Activated T-helper 1 cell treated with anti-CD3 and anti-CD28 coated beads, Interleukin-12 subunit alpha, Interleukin-12 subunit beta, Interleukin-2, Interleukin-4 antibody, amounts not matched to agents 30 ng/mL and 10 ng/mL and 1 ng/mL, durations not matched to agents 14 hours and 24 hours and 36 hours (primary cell): ENCODE measurements at regions of chr12 and their contacts with region 1.

Region 1: DNA sequence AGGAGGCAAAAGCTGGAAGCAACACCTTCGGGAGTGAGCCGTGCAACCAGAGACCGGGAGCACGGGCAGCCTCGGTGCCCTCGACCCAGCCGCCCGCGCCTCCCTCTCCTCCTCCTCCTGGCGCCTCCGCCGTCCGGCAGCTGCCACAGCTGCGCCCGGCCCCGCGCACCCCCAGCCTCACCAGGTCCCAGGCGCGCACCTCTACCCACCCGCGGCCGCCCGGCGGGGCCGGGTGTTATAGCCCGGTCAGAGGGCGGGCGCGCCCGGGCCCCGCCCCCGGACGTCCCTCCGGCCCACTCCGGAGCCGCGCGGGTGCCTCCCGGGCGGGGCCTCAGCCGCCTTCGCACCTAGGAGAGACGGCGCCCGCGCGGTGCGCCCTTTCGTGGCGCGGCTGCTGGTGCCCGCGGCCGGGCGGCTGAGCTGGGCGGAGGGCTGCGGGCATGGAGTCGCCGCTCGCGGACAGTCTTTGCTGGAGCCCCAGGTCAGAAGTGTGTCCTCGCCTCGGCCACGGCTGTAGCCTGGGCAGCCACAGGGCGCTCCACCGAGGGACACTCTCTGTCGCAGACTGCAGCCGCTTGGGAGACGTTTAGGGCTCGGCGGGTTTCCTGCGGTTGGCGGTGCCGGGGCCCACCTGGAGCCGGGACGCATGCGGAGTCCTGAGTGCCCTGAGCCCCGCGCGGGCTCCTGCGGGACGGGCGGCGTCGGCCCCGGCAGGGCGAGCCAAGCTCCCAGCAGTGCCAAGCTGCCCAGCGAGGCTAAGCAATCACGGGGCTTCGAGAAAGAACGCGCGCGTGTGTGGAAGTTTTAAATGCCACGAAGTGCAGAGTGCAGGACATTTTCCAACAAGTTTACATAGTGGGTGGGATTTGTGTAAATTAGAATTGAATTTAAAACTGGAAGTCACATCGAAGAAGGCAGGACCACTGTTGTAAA is at the start of gene CPM:
- DNase-seq: peak; percentile 81
- H3K4me3 Mint-ChIP-seq: peak within 1 kb of the TSS; percentile 96
- H3K27ac Mint-ChIP-seq: peak within 1 kb of the TSS; percentile 88
- H3K4me1 Mint-ChIP-seq: peaks cover 28% of the 10 kb centered on the region
- H3K27me3 Mint-ChIP-seq: peaks cover 19% of the 10 kb centered on the region
- total RNA-seq, gene CPM: 55.0 and 61.5 TPM in 2 replicates

Region 2: GRCh38 chr12:68745904-68746571 is 187.2 kb before region 1 on chr12 and contains the start of gene SLC35E3:
- intact Hi-C with region 1: loop called (anchors 10 kb)
- DNase-seq: peak; percentile 91
- H3K4me3 Mint-ChIP-seq: peak within 1 kb of the TSS; percentile 94
- H3K27ac Mint-ChIP-seq: peak within 1 kb of the TSS; percentile 87
- H3K4me1 Mint-ChIP-seq: peaks cover 50% of the 10 kb centered on the region
- H3K27me3 Mint-ChIP-seq: no peaks in the 10 kb centered on the region
- total RNA-seq, gene SLC35E3: 5.9 and 6.3 TPM in 2 replicates

Region 3: DNA sequence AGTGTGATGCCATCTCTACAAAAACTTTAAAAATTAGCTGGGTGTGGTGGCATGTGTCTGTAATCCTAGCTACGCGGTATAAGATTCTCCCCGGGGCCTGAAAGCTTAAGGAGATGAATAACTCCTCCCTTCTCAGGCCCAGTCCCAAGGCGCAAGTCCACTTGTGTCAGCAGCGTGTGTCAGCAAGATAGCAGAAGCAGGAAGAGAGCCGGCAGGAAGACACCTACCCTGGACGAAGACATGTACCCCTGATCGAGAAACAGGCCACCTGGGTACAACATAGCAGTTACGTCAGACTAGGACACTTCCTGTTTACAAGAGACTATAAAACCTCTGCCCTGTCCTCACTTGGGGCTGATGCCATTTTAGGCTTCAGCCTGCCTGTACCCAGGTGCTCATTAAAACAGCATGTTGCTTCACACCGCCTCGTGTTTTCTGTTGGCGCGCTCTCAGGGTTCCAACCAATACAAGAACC is 43.5 kb before region 1 on chr12:
- intact Hi-C with region 1: loop called (anchors 5 kb)
- DNase-seq: no peak
- H3K4me3 Mint-ChIP-seq: no peak overlapping the region
- H3K27ac Mint-ChIP-seq: no peak overlapping the region
- H3K4me1 Mint-ChIP-seq: peaks cover 45% of the 10 kb centered on the region
- H3K27me3 Mint-ChIP-seq: no peaks in the 10 kb centered on the region

Region 4: DNA sequence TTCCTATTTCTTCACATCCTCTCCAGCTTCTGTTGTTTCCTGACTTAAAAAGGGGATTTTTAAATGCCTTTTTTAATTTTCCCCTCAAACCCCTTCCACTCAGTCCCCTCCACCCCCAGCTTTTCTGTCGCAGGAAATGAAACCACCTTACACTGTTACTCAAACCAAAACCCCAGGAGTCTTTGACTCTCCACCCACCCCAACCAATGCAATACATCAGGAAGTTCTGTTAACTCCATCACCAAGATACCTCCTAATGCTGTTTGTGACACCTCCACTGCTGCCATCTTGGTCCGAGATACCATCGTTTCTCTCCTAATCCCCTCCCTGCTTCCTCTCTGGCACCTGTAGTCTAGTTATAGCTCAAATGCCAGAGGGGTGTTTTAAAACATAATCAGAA is 25.1 kb after region 1 on chr12:
- intact Hi-C with region 1: loop called (anchors 1 kb)
- DNase-seq: peak; percentile 45
- H3K4me3 Mint-ChIP-seq: peak overlapping the region; percentile 21
- H3K27ac Mint-ChIP-seq: peak overlapping the region; percentile 86
- H3K4me1 Mint-ChIP-seq: peaks cover 52% of the 10 kb centered on the region
- H3K27me3 Mint-ChIP-seq: no peaks in the 10 kb centered on the region

Region 5: DNA sequence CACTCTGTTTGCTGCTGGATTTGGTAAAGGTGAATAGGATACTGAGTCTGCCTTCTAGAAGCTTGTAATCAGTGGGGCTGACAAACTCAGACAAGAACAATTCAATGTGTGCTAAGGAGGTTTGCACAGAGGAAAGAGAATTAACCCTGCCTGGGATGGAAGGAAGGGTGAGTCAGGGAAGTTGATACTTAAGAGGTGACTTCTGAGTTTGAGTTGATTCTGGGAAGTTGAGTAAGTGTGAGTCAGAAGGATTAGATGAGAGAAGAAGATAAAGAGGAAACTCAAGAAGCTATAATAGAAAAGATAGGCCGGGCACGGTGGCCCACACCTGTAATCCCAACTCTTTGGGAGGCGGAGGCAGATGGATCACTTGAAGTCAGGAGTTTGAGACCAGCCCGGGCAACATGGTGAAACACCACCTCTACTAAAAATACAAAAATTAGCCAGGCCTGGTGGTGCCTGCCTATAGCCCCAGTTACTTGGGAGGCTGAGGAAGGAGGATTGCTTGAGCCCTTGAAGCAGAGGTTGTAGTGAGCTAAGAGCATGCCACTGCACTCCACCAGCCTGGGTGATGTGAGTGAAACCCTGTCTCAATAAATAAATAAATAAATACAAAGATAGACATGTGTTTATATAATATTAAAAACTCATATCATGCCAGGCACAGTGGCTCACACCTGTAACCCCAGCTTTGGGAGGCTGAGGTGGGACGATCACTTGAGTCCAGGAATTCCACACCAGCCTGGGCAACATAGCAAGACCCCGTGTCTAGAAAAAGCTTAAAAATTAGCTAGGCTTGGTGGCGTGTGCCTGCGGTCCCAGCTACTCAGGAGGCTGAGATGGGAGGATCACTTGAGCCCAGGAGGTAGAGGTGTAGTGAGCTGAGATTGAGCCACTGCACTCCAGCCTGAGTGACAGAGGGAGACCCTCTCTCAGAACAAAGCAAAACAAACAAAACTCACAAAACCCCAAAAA is 126.5 kb after region 1 on chr12:
- intact Hi-C with region 1: loop called (anchors 2 kb)
- DNase-seq: no peak
- H3K4me3 Mint-ChIP-seq: no peak overlapping the region
- H3K27ac Mint-ChIP-seq: peak overlapping the region; percentile 54
- H3K4me1 Mint-ChIP-seq: peaks cover 39% of the 10 kb centered on the region
- H3K27me3 Mint-ChIP-seq: no peaks in the 10 kb centered on the region